ENCODE measurements at regions of chr7 and their contacts with region 1.

Region 1: GRCh38 chr7:38027884-38028455 is 107.5 kb downstream of the EPDR1 start:
- DNase-seq: no peak
- H3K4me3 Mint-ChIP-seq: no peak overlapping the region
- H3K27ac Mint-ChIP-seq: no peak overlapping the region
- H3K4me1 Mint-ChIP-seq: no peaks in the 10 kb centered on the region
- H3K27me3 Mint-ChIP-seq: no peaks in the 10 kb centered on the region
- CTCF ChIP-seq: no peak

Region 2: GRCh38 chr7:37977243-37977642 is 50.7 kb before region 1 on chr7:
- CTCF ChIA-PET with region 1: no interaction called
- intact Hi-C with region 1: loop called (anchors 5 kb)
- DNase-seq: peak; percentile 25
- H3K4me3 Mint-ChIP-seq: peak overlapping the region; percentile 1
- H3K27ac Mint-ChIP-seq: peak overlapping the region; percentile 54
- H3K4me1 Mint-ChIP-seq: peaks cover 26% of the 10 kb centered on the region
- H3K27me3 Mint-ChIP-seq: no peaks in the 10 kb centered on the region
- CTCF ChIP-seq: no peak